WTC11 (cell line): ENCODE measurements at regions of chr12 and their contacts with region 1.

Region 1: DNA sequence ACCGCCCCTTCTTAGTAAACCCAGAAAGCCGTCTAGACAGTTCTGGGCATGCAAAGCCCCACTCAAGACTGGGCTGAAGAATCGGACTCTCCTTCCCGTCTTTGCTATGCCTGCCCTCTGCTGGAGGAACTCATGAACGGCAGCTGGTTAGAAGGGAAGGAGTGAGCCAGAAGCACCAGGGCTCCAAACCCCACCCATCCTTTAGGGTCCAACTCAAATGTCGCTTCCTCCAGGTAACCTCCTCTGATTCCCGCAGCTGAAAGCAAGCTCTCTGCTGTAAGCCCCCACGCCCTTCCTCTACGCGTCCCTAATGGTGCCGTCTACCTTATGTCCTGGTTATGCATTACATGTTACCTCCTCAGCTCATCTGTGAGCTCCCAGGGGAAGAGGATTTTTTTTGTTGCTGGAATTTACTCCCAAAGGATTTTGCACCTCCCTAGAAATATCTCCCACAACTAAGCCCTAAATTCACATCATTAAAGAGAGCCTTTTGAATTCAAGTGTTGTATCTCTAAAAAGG is 59.0 kb upstream of the SCN8A start:
- DNase-seq: peak; percentile 92
- ATAC-seq: peak; percentile 93
- H3K4me3 Mint-ChIP-seq: peak overlapping the region; percentile 44
- H3K27ac Mint-ChIP-seq: no peak overlapping the region
- H3K4me1 Mint-ChIP-seq: peaks cover 30% of the 10 kb centered on the region
- H3K27me3 Mint-ChIP-seq: no peaks in the 10 kb centered on the region
- CTCF ChIP-seq: peak; percentile 88

Region 2: DNA sequence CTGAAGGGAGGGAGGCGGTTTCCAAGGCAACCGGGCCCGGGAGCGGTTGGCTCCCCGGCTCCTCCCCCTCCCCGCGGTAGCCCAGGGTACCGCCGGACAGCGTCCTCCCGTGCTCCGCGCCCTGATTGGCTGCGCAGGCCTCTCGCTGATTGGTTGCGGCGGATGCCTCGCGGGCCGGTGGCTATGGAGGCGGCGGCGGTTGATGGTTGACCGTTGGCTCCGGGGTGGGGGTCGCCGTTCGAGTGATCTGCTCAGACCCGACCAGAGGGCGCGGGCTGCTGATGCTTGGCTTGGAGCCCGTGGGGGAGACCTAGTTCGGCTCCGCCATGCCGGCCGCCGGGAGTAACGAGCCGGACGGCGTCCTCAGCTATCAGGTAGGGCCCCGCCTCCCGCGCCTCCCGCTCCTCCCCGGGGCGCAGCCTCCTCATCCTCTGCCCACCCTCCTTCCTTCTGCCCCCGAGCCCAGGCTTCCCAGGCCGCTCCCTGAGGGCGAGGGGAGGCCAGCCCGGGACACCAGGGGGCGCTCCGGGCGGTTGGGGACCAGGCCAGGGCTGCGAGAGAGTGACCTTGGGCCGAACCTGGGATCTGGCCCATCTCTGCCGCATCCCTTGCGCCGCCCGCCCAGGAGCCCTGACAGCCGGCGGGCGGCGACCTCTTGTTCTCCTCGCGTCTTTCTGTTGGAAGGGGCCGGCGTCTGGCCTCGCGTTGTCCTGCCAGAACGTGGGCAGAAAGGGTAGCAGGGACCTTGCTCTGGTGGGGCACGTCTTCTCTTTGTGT is 107.2 kb before region 1 on chr12 and contains the start of gene SLC4A8:
- CTCF ChIA-PET with region 1: interaction called, 99 read pairs
- POLR2A ChIA-PET with region 1: no interaction called
- DNase-seq: peak; percentile 99
- ATAC-seq: peak; percentile 92
- H3K4me3 Mint-ChIP-seq: peak within 1 kb of the TSS; percentile 77
- H3K27ac Mint-ChIP-seq: no peak within 1 kb of the TSS
- H3K4me1 Mint-ChIP-seq: peaks cover 38% of the 10 kb centered on the region
- H3K27me3 Mint-ChIP-seq: no peaks in the 10 kb centered on the region
- CTCF ChIP-seq: peak; percentile 62
- total RNA-seq, gene SLC4A8: 13.1 to 23.5 TPM (median 16.9 TPM) in 3 replicates

Region 3: GRCh38 chr12:51521554-51522276 is 10.3 kb before region 1 on chr12:
- CTCF ChIA-PET with region 1: interaction called, 41 read pairs
- POLR2A ChIA-PET with region 1: no interaction called
- DNase-seq: no peak
- ATAC-seq: no peak
- H3K4me3 Mint-ChIP-seq: no peak overlapping the region
- H3K27ac Mint-ChIP-seq: no peak overlapping the region
- H3K4me1 Mint-ChIP-seq: no peaks in the 10 kb centered on the region
- H3K27me3 Mint-ChIP-seq: no peaks in the 10 kb centered on the region; the same call in 1 of the 2 replicates
- CTCF ChIP-seq: no peak

Region 4: GRCh38 chr12:51678086-51678724 is 146.2 kb after region 1 on chr12:
- CTCF ChIA-PET with region 1: interaction called, 11 read pairs
- POLR2A ChIA-PET with region 1: no interaction called
- DNase-seq: peak; percentile 41
- ATAC-seq: peak; percentile 94
- H3K4me3 Mint-ChIP-seq: no peak overlapping the region
- H3K27ac Mint-ChIP-seq: 0 out of 2 replicates have a peak overlapping the region, but pooled peaks have one; percentile 18
- H3K4me1 Mint-ChIP-seq: peaks cover 23% of the 10 kb centered on the region
- H3K27me3 Mint-ChIP-seq: no peaks in the 10 kb centered on the region
- CTCF ChIP-seq: peak; percentile 43; the same call in 1 of the 2 replicates